GM23248 (cell line): ENCODE measurements at regions of chr9 and their contacts with region 1.

Region 1: DNA sequence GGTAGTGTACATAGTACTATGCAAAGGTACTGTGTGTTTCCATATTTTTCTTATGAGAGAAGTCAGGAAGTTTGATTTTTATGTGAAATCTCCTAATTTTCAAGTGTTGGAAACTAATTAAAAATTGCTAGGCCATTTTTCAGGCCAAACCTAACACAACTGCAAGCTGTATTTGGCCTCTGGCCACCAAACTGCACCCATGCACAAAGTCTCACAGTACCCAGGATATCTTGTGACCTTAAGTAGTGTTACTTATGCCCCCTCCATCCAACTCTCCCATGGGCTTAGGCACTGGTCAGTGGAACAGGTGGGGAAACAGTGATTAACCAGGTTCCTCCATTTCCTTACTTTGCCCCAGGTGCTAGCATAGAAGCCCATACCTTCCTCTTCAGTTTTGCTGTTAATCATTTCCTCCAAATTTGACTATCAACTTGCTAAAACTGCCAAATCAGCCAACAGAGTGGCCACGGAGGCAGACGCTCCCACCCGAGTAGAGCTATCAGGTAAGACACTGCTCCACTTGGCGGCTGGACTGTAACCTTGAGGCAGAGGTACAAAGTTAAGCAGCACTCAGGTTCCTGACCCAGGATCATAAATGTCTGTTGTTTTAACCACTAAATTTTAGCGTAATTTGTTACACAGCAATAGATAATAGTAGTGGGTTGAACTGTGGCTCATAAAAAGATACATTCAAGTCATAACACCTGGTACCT is 19.5 kb upstream of the KIF27 start:
- DNase-seq: no peak
- H3K4me3 ChIP-seq: no peak overlapping the region
- H3K27ac ChIP-seq: no peak overlapping the region
- H3K4me1 ChIP-seq: peaks cover 1% of the 10 kb centered on the region; the same call in 1 of the 2 replicates
- H3K27me3 ChIP-seq: no peaks in the 10 kb centered on the region

Region 2: DNA sequence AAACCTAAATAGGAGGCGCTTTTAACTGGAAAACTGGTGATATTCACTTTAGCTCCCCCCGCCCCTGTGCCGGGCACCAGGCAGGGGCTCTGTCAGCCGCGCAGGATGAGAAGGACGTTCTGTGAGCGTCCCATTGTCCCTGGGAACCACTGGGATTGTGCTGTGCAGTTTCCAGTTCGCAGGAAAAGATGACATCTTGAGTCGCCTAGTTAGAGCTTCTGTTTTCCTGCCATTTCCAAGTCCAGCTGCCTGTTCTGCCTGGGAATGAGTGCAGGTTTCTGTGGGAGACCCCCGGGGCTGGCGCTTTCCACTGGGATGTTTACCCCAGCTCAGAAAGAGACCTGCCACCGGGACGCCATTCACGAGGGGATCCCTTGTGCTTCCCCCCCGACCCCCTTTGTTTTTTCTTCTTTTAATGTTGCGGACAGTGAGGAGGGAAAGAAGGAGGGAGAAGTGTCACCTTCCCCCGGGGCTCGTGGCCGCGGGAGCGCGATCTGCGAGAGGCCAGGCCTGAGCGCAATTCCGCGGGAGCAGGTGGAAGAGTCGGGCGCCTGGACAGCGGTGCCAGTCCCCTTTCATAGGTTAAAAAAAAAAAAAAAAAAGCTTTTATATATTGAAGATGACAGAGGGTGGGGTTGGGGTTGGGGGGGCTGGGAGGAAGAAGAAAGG is 161.4 kb after region 1 on chr9:
- in situ Hi-C with region 1: no loop called
- DNase-seq: no peak
- H3K4me3 ChIP-seq: no peak overlapping the region
- H3K27ac ChIP-seq: no peak overlapping the region
- H3K4me1 ChIP-seq: no peaks in the 10 kb centered on the region
- H3K27me3 ChIP-seq: peaks cover 6% of the 10 kb centered on the region; the same call in 1 of the 2 replicates

Region 3: DNA sequence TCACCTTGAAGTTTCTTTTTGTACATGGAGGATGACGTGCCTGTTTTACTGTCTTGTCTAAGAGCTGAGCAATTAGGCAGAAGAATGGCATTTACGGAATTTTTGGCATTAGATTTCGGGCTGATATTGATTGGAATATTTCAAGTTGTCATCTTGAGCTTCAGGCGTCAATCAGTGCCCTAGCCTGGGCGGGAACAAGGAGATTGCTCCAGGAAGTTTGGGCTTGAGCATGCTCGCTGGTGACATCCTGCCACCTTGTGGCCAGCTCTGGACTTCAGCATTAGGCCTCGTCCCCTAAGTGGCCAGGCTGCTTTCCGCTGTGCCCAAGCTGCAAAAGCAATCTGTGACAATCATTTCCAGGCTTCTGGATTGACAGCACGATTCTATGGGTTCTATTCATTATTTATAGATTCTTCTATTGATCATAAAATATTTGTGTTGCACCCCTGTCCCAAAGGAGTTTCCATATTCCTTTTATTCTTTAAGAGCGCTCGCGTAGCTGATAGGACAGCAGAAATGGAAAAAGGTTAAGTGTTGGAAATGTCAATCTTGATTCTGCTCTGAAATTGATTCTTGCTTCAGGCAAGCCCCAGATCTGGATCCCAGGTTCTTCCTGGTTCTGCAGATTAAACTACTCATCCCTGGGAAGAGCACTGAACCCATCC is 320.5 kb after region 1 on chr9:
- in situ Hi-C with region 1: loop called (anchors 5 kb)
- DNase-seq: peak; percentile 85
- H3K4me3 ChIP-seq: peak overlapping the region; percentile 68
- H3K27ac ChIP-seq: no peak overlapping the region
- H3K4me1 ChIP-seq: no peaks in the 10 kb centered on the region
- H3K27me3 ChIP-seq: no peaks in the 10 kb centered on the region